Gastrocnemius medialis (tissue), 4 donors: ENCODE measurements at regions of chr12 and their contacts with region 1.

Region 1: GRCh38 chr12:106841510-106842302 is 67.2 kb downstream of the RIC8B start:
- DNase-seq: peak in 1 of 2 donors; percentile 4
- ATAC-seq: peak; percentile 56 to 63
- H3K4me3 ChIP-seq: no peak overlapping the region
- H3K27ac ChIP-seq: peak overlapping the region in 3 of 4 donors; percentile 31 to 52 (median 36)
- H3K4me1 ChIP-seq: peaks cover 28 to 32% of the 10 kb centered on the region in 2 donors
- H3K27me3 ChIP-seq: no peaks in the 10 kb centered on the region
- CTCF ChIP-seq: peak in 3 of 5 experiments; percentile 32 to 57 (median 55)
- POLR2A ChIP-seq: no peak

Region 2: GRCh38 chr12:106736051-106736957 is 105.4 kb before region 1 on chr12:
- in situ Hi-C with region 1: no loop called
- intact Hi-C with region 1: loop called (anchors 5 kb)
- DNase-seq: no peak
- ATAC-seq: no peak
- H3K4me3 ChIP-seq: no peak overlapping the region
- H3K27ac ChIP-seq: no peak overlapping the region
- H3K4me1 ChIP-seq: no peaks in the 10 kb centered on the region
- H3K27me3 ChIP-seq: no peaks in the 10 kb centered on the region
- CTCF ChIP-seq: no peak
- POLR2A ChIP-seq: no peak

Region 3: DNA sequence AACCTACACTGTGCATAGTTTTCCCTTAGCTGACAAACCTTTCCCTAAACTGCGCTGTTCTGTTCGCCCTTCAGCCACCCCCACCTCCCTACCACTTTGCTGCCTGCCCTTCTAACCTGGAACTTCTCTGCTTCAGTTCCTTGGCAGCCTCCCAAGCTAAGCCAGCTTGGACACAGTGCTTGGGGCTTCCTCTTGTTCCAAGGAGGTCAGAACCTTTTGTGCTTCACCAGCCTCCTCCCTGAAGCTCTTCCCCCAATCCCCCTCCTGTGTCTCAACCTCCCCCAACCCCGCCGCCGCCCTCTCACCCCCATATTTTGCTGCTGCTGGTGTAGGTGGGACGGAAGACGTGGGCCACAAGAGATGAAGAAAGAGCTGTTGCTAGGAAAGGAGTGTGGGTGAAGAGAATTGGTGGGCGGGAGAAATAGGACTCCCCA is 75.3 kb before region 1 on chr12:
- in situ Hi-C with region 1: no loop called
- intact Hi-C with region 1: no loop called
- DNase-seq: peak in 1 of 2 donors; percentile 32
- ATAC-seq: peak; percentile 13 to 51
- H3K4me3 ChIP-seq: no peak overlapping the region
- H3K27ac ChIP-seq: peak overlapping the region in 3 of 4 donors; percentile 1 to 55 (median 29)
- H3K4me1 ChIP-seq: peaks cover 9 to 17% of the 10 kb centered on the region in 2 donors
- H3K27me3 ChIP-seq: no peaks in the 10 kb centered on the region
- CTCF ChIP-seq: no peak
- POLR2A ChIP-seq: no peak